ENCODE measurements at regions of chr10 and their contacts with region 1.

Region 1: DNA sequence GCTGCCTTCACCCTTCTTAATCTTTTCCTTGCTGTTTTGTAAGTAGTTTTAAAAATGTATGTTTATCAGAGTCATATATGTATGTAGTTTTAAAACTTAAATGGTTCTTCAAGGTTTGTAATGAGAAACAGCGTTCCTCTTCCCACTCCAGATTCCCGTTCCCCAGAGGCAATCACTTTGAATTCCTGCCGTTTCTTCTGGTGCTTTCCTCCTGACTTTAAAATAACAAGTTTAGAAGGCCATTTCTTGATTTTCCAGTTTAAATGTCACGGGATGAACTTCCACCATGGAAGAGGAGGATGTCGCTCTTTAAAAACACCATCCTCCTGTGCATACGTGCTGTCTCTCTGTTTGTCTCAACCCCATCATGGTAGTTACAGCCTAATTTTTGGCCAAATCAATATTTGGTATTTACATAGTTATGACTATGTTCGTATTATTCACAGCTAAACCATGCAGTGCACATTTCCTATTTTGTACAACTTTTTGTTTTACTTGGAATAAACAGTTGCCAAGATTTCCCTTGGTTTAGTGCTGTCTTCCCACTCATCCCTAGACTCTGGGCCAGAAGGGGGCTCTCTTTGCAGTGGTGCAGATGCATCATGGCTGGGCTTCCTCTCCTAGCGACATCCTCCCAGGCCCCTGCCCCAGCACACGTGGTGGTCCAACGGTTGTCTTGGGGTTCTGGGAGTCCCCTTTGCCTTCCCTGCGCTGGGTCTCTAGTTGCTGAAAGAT is 151.4 kb downstream of the PTPN20 start:
- DNase-seq: peak in 2 of 14 experiments; percentile 11 to 30
- ATAC-seq: no peak
- H3K4me3 ChIP-seq: no peak overlapping the region
- H3K4me3 Mint-ChIP-seq: no peak overlapping the region
- H3K27ac ChIP-seq: no peak overlapping the region
- H3K27ac Mint-ChIP-seq: no peak overlapping the region
- H3K4me1 ChIP-seq: no peaks in the 10 kb centered on the region
- H3K4me1 Mint-ChIP-seq: no peaks in the 10 kb centered on the region
- H3K27me3 ChIP-seq: no peaks in the 10 kb centered on the region
- H3K27me3 Mint-ChIP-seq: no peaks in the 10 kb centered on the region
- CTCF ChIP-seq: no peak

Region 2: DNA sequence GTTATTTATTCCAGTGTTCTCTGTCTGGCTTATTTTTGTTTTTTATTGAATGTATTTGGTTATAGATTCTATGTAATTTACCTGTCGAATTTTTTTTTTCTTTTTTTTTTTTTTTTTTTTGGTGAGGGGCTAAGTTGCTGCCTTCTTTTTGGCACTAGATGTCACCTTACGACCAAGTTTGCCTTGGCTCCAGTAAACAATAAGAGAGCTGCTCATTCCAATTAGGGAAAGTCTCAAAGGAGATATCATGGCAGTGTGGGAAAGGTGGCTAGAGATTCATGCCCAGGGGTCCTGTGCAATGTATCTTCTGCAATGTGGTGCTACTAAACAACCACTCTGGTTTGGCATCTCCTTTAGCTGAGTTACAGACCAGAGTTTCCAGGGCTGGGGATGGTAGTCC is 67.4 kb before region 1 on chr10:
- CTCF ChIA-PET with region 1: no interaction called
- POLR2A ChIA-PET with region 1: no interaction called
- intact Hi-C with region 1: no loop called
- DNase-seq: no peak
- ATAC-seq: no peak
- H3K4me3 ChIP-seq: no peak overlapping the region
- H3K4me3 Mint-ChIP-seq: no peak overlapping the region
- H3K27ac ChIP-seq: no peak overlapping the region
- H3K27ac Mint-ChIP-seq: no peak overlapping the region
- H3K4me1 ChIP-seq: no peaks in the 10 kb centered on the region
- H3K4me1 Mint-ChIP-seq: no peaks in the 10 kb centered on the region
- H3K27me3 ChIP-seq: peaks cover 0 to 4% of the 10 kb centered on the region in 2 experiments
- H3K27me3 Mint-ChIP-seq: peaks cover 10% of the 10 kb centered on the region
- CTCF ChIP-seq: no peak

Region 3: GRCh38 chr10:47037654-47038425 is 24.8 kb before region 1 on chr10:
- CTCF ChIA-PET with region 1: no interaction called
- POLR2A ChIA-PET with region 1: no interaction called
- intact Hi-C with region 1: loop called in 1 of 2 experiments (anchors 1 kb)
- DNase-seq: no peak
- ATAC-seq: no peak
- H3K4me3 ChIP-seq: no peak overlapping the region
- H3K4me3 Mint-ChIP-seq: no peak overlapping the region
- H3K27ac ChIP-seq: no peak overlapping the region
- H3K27ac Mint-ChIP-seq: no peak overlapping the region
- H3K4me1 ChIP-seq: no peaks in the 10 kb centered on the region
- H3K4me1 Mint-ChIP-seq: no peaks in the 10 kb centered on the region
- H3K27me3 ChIP-seq: no peaks in the 10 kb centered on the region
- H3K27me3 Mint-ChIP-seq: no peaks in the 10 kb centered on the region
- CTCF ChIP-seq: no peak

Measured in CD4-positive, alpha-beta T cell (primary cell).